Caco-2 (cell line): ENCODE measurements at regions of chr11 and their contacts with region 1.

Region 1: DNA sequence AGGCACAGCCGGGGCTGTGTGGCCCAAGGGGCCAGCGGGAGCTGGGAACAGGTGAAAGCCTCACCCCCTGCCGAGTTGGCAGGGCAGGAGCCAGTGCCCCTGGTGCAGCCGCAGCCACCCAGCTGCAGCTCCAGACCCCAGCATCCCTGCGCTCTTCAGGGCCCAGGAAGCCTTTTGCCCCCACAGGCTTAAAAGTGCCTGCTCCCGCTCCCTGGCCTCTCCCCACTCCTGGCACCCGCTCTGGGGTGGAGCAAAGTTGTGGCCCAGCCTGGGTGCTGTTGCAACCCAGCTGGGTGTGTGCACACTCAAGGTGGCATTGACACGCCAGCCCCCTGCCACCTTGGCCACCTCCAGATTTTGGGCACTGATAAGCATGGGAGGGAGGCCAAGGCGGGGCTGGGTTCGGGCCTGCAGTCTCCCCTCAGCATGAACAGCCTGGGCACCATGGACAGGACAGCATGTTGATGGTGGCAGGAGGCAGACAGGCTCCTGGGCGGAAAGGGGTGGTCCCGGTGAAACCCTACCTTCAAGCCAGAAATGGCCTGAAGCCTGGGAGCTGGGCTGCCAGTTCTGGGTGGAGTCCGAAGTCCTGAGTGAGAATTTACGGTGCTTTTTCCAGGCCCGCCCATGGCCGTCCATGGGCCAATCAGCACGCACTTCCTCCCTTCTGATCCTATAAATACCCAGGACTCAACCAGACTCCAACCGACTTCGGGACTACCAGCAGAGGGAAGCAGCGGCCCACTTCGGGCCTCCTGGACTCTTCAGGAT is 23.5 kb upstream of the RNASEH2C start:
- DNase-seq: peak; percentile 70 to 76
- H3K4me3 ChIP-seq: no peak overlapping the region
- H3K4me3 Mint-ChIP-seq: no peak overlapping the region
- H3K27ac Mint-ChIP-seq: no peak overlapping the region
- H3K4me1 ChIP-seq: no peaks in the 10 kb centered on the region
- H3K4me1 Mint-ChIP-seq: no peaks in the 10 kb centered on the region
- H3K27me3 ChIP-seq: no peaks in the 10 kb centered on the region; the same call in none of the 2 replicates
- H3K27me3 Mint-ChIP-seq: peaks cover 4% of the 10 kb centered on the region
- CTCF ChIP-seq: peak; percentile 47 to 66

Region 2: GRCh38 chr11:65786786-65787636 is 42.9 kb after region 1 on chr11 and contains the start of gene OVOL1:
- CTCF ChIA-PET with region 1: interaction called, 11 read pairs
- POLR2A ChIA-PET with region 1: no interaction called
- intact Hi-C with region 1: no loop called
- DNase-seq: peak; percentile 93 to 95
- H3K4me3 ChIP-seq: peak within 1 kb of the TSS; percentile 85
- H3K4me3 Mint-ChIP-seq: peak within 1 kb of the TSS; percentile 76
- H3K27ac Mint-ChIP-seq: peak within 1 kb of the TSS; percentile 76
- H3K4me1 ChIP-seq: peaks cover 37% of the 10 kb centered on the region
- H3K4me1 Mint-ChIP-seq: peaks cover 22% of the 10 kb centered on the region
- H3K27me3 ChIP-seq: no peaks in the 10 kb centered on the region
- H3K27me3 Mint-ChIP-seq: no peaks in the 10 kb centered on the region
- CTCF ChIP-seq: no peak
- total RNA-seq, gene OVOL1: 19.5 and 21.2 TPM in 2 replicates